Ovary (tissue), 10 donors: ENCODE measurements at regions of chr11 and their contacts with region 1.

Region 1: DNA sequence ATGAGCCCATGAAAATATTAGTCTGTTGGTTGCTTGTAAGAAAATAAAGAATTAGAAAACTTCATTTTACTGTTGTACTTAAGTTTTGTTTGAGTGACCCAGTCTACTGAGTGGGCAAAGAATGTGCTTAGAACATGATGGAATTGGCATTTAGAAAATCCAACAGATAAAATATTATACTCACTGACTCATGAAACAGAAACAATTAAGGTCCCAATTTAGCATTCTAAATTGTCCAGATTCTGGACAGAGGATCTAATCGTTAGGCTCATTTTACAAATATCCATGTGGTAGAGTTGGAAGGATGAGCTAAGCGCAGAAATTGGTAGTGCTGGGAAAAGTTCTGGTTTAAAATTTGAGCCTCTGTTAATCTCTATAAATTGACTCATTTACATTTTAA is 45.4 kb downstream of the METTL15 start:
- DNase-seq: no peak
- H3K4me3 ChIP-seq: no peak overlapping the region
- H3K27ac ChIP-seq: no peak overlapping the region
- H3K4me1 ChIP-seq: no peaks in the 10 kb centered on the region
- H3K27me3 ChIP-seq: no peaks in the 10 kb centered on the region
- CTCF ChIP-seq: no peak
- EP300 ChIP-seq: no peak
- POLR2A ChIP-seq: no peak

Region 2: DNA sequence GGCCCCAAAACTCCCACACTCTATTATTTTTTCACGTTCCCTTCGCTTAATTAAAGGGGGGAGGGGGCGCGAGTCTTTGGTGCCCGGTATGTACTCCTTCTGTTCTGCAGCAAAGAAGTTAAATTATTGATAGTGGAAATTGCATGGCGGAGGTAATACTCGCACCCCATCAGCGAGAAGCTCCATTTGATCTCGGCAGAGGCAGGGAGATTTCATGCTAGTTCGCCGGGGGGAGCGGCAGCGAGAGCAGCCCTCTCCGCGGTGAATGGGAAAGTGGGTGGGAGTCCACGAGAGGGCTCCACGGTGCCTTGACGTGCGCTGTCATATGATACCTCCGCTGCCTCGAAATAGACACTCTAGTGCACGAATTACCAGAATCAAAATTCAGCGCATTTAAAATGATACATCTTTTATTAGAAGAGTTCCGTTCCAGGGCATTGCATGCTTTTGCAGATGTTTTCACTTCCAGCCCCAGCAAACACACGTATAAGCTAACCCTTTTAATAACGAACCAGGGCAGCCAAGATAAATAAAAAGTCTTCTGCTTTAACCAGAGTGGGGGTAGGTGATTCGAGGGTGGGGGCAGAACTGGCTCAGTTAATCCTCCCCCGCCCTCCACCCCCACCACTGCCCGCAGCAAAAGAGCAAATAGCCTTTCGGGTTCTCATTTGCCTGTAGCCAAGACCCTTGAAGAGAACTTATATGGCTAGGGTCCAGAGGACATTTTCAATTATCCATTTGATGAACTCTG is 452.1 kb before region 1 on chr11:
- intact Hi-C with region 1: loop called in 1 of 4 experiments (anchors 5 kb)
- DNase-seq: peak in 2 of 5 donors; percentile 18 to 23
- H3K4me3 ChIP-seq: peak overlapping the region; percentile 37
- H3K27ac ChIP-seq: no peak overlapping the region
- H3K4me1 ChIP-seq: peaks cover 5% of the 10 kb centered on the region
- H3K27me3 ChIP-seq: no peaks in the 10 kb centered on the region
- CTCF ChIP-seq: no peak
- EP300 ChIP-seq: no peak
- POLR2A ChIP-seq: no peak